Heart right ventricle (tissue), 16 donors: ENCODE measurements at regions of chr20 and their contacts with region 1.

Region 1: GRCh38 chr20:4415281-4415680 is 306.4 kb upstream of the PRND start:
- DNase-seq: no peak
- ATAC-seq: no peak
- H3K4me3 ChIP-seq: no peak overlapping the region
- H3K27ac ChIP-seq: no peak overlapping the region
- H3K4me1 ChIP-seq: peaks cover 0 to 15% (median 0%) of the 10 kb centered on the region in 9 donors
- H3K27me3 ChIP-seq: no peaks in the 10 kb centered on the region
- CTCF ChIP-seq: no peak

Region 2: DNA sequence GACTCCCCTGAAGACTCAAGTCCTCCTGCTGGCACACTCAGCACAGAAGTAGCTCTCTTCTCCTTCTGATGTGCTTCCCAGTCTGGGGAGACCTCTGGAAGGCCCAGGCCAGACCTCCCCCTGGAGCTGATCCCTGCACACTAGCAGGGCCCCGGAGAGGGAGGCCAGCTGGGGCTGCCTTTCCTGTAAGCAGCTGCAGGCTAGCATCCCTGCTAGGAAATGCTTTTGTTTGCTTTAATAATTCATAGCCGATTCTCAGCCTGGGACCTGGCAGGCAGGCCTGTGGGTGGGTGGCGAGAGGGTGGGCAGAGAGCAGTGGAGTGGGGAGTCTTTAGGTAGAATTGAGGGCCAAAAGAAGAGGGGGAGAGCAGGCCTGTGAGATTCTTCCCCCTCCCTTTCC is 1717.5 kb before region 1 on chr20:
- intact Hi-C with region 1: loop called in 1 of 10 experiments (anchors 5 kb)
- DNase-seq: no peak
- ATAC-seq: no peak
- H3K4me3 ChIP-seq: no peak overlapping the region
- H3K27ac ChIP-seq: no peak overlapping the region
- H3K4me1 ChIP-seq: peaks cover 0 to 12% (median 4%) of the 10 kb centered on the region in 9 donors
- H3K27me3 ChIP-seq: peaks cover 0 to 37% (median 14%) of the 10 kb centered on the region in 7 donors
- CTCF ChIP-seq: no peak

Region 3: DNA sequence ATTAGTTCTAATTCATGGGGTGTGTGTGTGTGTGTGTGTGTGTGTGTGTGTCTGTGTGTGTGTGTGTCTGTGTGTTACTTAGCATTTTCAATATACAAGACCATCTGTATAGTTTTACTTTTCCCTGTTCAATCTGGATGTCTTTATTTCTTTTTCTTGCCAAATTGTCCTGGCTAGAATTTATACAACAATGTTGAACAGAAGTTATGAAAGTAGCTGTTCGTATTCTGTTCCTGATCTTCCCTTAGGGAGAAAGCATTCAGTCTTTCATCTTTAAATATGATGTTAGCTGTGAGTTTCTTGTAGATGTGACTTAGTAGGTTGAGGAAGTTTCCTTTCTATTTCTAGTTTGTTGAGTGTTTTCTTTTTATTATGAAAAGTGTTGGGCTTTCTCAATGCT is 65.2 kb before region 1 on chr20:
- intact Hi-C with region 1: no loop called
- DNase-seq: no peak
- ATAC-seq: no peak
- H3K4me3 ChIP-seq: no peak overlapping the region
- H3K27ac ChIP-seq: no peak overlapping the region
- H3K4me1 ChIP-seq: no peaks in the 10 kb centered on the region
- H3K27me3 ChIP-seq: peaks cover 0 to 11% (median 0%) of the 10 kb centered on the region in 7 donors
- CTCF ChIP-seq: no peak